ENCODE measurements at regions of chr3 and their contacts with region 1.

Region 1: DNA sequence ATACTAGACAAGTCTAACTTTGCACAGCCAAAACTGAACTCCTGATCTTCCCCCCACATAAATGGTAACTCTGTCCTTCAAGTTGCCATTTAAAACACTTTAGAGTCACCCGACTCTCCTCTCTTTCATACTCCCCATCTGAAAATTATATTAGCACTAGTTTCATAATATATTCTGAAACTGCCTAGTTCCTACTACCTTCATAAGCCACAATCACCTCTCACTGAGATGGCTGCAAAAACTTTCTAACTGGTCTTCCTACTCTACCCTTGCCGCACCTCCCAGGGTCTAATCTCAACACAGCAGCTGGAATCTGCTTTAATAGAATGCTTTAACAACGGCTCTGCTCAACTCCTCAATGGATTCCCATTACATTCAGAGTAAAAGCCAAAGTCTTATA is 55.0 kb downstream of the GLB1 start:
- DNase-seq: no peak
- H3K4me3 Mint-ChIP-seq: no peak overlapping the region
- H3K27ac Mint-ChIP-seq: no peak overlapping the region
- H3K4me1 Mint-ChIP-seq: peaks cover 59% of the 10 kb centered on the region
- H3K27me3 Mint-ChIP-seq: no peaks in the 10 kb centered on the region

Region 2: GRCh38 chr3:32991781-32992180 is 50.1 kb before region 1 on chr3:
- CTCF ChIA-PET with region 1: no interaction called
- POLR2A ChIA-PET with region 1: no interaction called
- DNase-seq: no peak
- H3K4me3 Mint-ChIP-seq: no peak overlapping the region
- H3K27ac Mint-ChIP-seq: peak overlapping the region; percentile 37
- H3K4me1 Mint-ChIP-seq: peaks cover 89% of the 10 kb centered on the region
- H3K27me3 Mint-ChIP-seq: no peaks in the 10 kb centered on the region

Region 3: DNA sequence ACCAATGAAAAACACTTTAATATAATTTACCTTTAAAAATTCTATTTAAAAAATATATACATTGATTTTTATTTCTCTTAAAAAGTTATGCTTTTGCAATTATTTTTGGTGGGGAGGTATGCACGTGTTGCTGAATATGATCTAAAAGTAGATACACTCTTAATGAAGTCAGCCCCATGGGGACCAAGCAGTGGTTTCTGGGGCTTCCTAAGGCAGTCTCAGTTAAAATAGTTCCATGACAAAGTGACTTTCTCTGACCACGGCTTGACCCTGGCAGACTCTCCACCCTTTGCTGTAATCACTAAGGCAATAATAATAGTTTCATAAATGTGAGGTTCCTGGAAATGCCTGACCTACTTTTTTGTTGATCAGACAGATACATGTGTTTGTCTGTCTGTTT is 40.0 kb before region 1 on chr3:
- CTCF ChIA-PET with region 1: no interaction called
- POLR2A ChIA-PET with region 1: interaction called, 20 read pairs
- DNase-seq: no peak
- H3K4me3 Mint-ChIP-seq: no peak overlapping the region
- H3K27ac Mint-ChIP-seq: no peak overlapping the region
- H3K4me1 Mint-ChIP-seq: peaks cover 80% of the 10 kb centered on the region
- H3K27me3 Mint-ChIP-seq: no peaks in the 10 kb centered on the region

Region 4: DNA sequence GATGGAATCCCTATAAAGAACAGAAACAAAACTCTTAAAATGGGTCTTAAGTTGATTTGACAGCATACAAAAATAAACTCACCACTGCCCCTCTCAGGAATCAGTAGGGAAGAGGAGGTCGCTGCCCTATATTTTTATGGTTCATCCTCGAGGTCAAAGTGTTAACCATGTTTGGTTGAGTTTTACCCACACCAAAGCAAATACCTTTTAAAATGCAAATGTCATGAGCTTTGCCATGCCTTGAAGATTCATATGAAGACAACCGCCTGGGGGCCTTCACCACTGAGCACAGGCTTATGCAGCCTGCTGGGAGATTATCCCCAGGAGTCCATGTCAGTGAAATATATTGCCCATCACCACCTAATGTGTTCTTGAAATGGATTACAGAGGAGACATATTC is 11.1 kb before region 1 on chr3:
- CTCF ChIA-PET with region 1: interaction called, 100 read pairs
- POLR2A ChIA-PET with region 1: interaction called, 105 read pairs
- DNase-seq: peak; percentile 72
- H3K4me3 Mint-ChIP-seq: no peak overlapping the region
- H3K27ac Mint-ChIP-seq: peak overlapping the region; percentile 41
- H3K4me1 Mint-ChIP-seq: peaks cover 31% of the 10 kb centered on the region
- H3K27me3 Mint-ChIP-seq: no peaks in the 10 kb centered on the region

Region 5: DNA sequence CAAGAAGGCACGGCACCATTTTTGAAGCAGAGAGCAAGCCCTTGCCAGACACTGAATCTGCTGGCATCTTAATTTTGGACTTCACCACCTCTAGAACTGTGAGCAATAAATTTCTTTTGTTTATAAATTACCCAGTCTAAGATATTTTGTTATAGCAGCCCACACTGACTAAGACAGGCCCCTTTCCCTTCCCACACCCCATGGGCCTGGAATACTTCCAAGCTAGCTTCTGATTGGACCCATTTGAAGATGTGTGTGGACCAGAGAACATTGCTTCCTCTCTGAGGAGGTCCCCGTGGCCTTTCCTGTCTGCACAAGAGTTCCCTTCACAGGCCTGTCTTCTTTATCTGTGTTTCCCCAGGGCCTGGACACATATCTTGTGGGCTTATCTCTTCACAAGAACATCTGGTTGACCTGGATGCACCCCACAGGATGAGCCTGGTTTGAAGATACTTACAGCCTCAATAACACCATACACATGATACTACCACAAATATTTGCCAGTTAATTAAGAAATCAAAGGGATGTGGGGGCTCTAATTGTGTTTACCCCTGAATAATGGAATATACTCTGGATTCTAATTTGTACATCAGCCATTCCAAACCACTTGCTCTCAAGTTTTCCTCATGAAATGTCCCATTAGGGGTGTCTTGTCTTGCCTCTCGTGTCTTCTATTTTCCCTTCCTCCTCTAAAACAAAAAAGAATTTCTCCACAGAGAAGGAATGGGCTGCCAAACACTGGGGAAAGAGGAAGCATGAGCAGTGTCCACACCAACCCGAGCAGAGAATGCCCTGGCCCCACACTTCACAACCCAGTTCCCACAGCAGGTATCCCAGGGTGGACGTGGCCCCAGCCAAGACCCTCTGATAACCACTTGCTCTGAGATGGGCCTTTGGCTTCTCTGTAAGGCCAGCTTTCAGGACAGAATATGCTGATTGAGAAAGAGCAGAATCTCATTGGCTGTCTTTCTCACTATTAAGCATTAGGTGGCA is 12.5 kb after region 1 on chr3:
- CTCF ChIA-PET with region 1: interaction called, 76 read pairs
- POLR2A ChIA-PET with region 1: interaction called, 105 read pairs
- DNase-seq: no peak
- H3K4me3 Mint-ChIP-seq: peak overlapping the region; percentile 71
- H3K27ac Mint-ChIP-seq: peak overlapping the region; percentile 99
- H3K4me1 Mint-ChIP-seq: peaks cover 84% of the 10 kb centered on the region
- H3K27me3 Mint-ChIP-seq: no peaks in the 10 kb centered on the region

Measured in activated CD4-positive, alpha-beta memory T cell treated with anti-CD3 and anti-CD28 coated beads, Interleukin-2, amount 10 ng/mL, durations not matched to agents 7 days and 5 days (primary cell).